ENCODE measurements at regions of chr5 and their contacts with region 1.

Region 1: DNA sequence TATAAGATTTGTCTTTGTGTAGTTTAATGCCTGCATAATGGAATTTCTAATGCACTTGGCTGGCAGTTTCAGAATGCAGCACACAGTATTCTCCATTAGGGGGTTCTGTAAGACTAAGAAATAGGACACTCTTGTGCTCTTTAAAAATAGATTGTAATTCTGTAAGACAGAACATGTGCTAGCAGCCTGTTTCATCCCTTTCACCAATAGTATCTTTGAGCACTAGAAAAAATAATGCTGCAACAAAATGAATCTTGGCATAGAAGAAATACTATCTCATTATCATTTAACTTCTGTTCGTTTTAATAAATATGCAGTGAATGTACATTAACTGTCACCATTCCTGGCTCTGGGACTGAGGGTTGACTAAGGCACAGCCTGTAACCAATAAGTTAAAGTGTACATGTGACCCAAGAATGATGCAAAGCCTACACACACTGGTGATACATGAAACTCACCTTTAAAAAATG is 23.8 kb upstream of the ZNF622 start:
- DNase-seq: peak in 1 of 2 experiments; percentile 48
- H3K4me3 ChIP-seq: no peak overlapping the region
- H3K4me3 Mint-ChIP-seq: no peak overlapping the region
- H3K27ac Mint-ChIP-seq: peak overlapping the region; percentile 54
- H3K4me1 ChIP-seq: peaks cover 52% of the 10 kb centered on the region
- H3K4me1 Mint-ChIP-seq: peaks cover 31% of the 10 kb centered on the region
- H3K27me3 ChIP-seq: no peaks in the 10 kb centered on the region
- H3K27me3 Mint-ChIP-seq: no peaks in the 10 kb centered on the region
- CTCF ChIP-seq: peak; percentile 75 to 79

Region 2: DNA sequence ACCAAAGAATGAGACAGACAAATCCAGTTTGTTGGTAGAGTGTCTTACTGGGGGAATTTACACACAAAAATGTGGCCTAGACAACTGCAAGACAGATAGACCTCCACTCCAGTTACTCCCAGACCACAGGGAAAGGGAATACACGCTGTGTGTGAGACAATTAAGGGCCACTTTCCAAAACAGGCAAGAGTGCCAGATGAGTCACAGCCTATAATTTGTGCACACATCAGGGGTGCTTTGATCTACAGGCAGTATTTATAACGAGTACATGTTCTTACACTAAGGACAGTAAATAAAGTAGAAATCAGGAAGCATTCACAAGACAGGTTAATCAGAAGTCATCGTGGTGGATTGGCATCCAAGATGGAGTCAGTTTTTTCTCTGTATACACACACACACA is 138.5 kb before region 1 on chr5:
- CTCF ChIA-PET with region 1: no interaction called
- POLR2A ChIA-PET with region 1: no interaction called
- intact Hi-C with region 1: no loop called
- DNase-seq: no peak
- H3K4me3 ChIP-seq: no peak overlapping the region
- H3K4me3 Mint-ChIP-seq: no peak overlapping the region
- H3K27ac Mint-ChIP-seq: no peak overlapping the region
- H3K4me1 ChIP-seq: no peaks in the 10 kb centered on the region
- H3K4me1 Mint-ChIP-seq: no peaks in the 10 kb centered on the region
- H3K27me3 ChIP-seq: no peaks in the 10 kb centered on the region
- H3K27me3 Mint-ChIP-seq: peaks cover 7% of the 10 kb centered on the region
- CTCF ChIP-seq: no peak

Region 3: GRCh38 chr5:16508730-16509531 is 19.6 kb after region 1 on chr5:
- CTCF ChIA-PET with region 1: no interaction called
- POLR2A ChIA-PET with region 1: no interaction called
- intact Hi-C with region 1: loop called (anchors 2 kb)
- DNase-seq: peak; percentile 56 to 60
- H3K4me3 ChIP-seq: no peak overlapping the region
- H3K4me3 Mint-ChIP-seq: peak overlapping the region; percentile 46
- H3K27ac Mint-ChIP-seq: peak overlapping the region; percentile 59
- H3K4me1 ChIP-seq: peaks cover 31% of the 10 kb centered on the region
- H3K4me1 Mint-ChIP-seq: peaks cover 29% of the 10 kb centered on the region
- H3K27me3 ChIP-seq: no peaks in the 10 kb centered on the region
- H3K27me3 Mint-ChIP-seq: no peaks in the 10 kb centered on the region
- CTCF ChIP-seq: no peak

Measured in Caco-2 (cell line).